Breast epithelium (tissue), 4 donors: ENCODE measurements at regions of chr11 and their contacts with region 1.

Region 1: DNA sequence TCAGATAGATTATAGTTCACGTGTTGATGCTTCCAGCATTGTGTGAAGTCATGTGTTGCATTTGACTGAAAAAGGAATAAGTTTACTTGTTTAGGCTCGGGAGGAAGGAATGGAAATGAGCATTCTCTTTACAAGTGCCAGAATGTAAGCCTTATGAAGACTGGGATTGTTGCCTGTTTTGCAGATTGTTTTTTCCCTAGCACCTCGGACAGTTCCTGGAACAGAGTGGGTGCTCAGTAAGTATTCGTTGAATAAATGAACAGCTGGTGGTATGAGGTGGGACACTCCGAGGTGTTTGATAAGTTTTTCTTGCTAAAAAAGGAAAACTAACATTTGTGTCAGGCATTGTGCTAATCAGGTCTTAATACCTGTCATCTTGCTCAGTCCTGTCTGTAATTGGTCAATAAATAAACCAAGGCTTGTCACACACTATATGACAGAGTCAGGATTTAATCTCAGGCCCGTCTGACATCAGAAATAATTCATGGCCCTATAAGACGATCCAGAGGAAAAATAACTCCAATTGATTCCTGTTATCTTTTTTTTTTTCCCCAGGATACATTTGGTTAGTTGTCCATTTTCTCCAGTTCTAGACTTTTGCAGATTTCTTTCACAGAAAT is 304.7 kb downstream of the NELL1 start:
- DNase-seq: no peak
- H3K4me3 ChIP-seq: no peak overlapping the region
- H3K27ac ChIP-seq: no peak overlapping the region
- H3K4me1 ChIP-seq: no peaks in the 10 kb centered on the region
- H3K27me3 ChIP-seq: no peaks in the 10 kb centered on the region
- CTCF ChIP-seq: no peak
- POLR2A ChIP-seq: no peak

Region 2: DNA sequence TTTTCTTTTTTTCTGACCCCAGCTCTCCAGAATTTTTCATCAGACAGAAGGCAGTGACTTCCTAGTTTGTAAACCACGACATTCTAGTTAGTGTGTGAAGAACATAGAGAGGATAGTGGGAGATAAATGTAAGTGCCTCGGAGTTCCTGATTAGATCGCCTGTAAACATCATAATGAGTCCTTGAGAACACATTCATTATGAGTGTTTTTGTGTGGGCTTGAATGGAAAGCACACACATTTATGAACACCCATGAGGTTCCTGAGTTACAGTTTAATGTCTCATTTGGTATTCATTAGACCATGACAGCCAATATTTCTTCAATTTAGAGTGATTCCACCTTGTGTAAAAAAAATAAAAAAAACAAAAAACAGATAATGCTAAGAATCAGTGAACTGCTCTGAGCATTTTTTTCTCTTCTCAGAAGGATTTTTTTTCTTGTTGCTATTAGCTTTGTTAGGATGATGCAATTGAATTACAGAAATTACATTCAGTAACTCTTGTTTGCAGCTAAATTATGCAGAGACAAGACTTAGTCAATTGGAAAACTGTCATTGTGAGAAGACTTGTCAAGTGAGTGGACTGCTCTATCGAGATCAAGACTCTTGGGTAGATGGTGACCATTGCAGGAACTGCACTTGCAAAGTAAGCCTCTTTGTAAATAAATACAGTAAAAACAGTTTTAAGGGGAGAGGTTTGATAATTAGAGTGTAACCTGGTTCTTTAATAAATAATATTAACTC is 47.1 kb before region 1 on chr11:
- intact Hi-C with region 1: loop called (anchors 2 kb)
- DNase-seq: no peak
- H3K4me3 ChIP-seq: no peak overlapping the region
- H3K27ac ChIP-seq: no peak overlapping the region
- H3K4me1 ChIP-seq: no peaks in the 10 kb centered on the region
- H3K27me3 ChIP-seq: no peaks in the 10 kb centered on the region
- CTCF ChIP-seq: no peak
- POLR2A ChIP-seq: no peak